ENCODE measurements at regions of chr9 and their contacts with region 1.

Region 1: DNA sequence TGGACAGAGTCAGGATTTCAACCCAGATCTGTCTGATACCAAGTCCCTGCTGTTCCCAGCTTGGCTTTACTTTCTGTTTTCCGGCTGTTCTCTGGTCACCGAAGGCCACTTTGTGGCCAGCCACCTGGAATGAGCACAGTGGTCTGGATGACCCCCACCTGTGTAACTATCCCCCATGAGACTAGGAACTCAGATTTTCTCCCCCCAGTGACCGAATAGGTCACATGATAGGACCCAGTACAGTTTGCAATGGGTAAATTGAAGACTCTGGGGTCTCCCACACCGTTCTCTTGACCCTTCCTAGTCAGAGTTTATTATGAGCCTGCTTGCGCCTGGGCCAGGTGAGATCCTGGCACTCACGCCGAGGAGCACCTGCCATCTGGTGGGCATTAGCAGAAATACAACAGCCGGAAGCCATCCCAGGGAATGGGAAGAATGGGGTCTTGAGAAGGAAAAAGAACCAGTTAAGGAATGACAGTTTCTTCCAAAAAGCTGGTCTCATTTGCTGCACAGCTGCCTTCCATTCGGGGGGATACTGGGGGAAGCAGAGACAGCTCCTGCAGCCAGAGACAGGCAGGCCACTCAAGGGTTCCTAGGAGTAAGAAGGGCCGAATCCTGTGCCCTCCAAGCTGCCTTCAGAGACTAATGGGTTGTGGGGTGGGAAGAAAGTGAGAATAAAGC is 7.1 kb downstream of the PHYHD1 start:
- DNase-seq: peak; percentile 81
- CTCF ChIP-seq: peak; percentile 85

Region 2: GRCh38 chr9:128863647-128864046 is 64.2 kb before region 1 on chr9:
- in situ Hi-C with region 1: loop called (anchors 10 kb)
- DNase-seq: peak; percentile 89
- CTCF ChIP-seq: peak; percentile 96

Region 3: GRCh38 chr9:129068990-129069861 is 141.4 kb after region 1 on chr9:
- in situ Hi-C with region 1: no loop called
- DNase-seq: no peak
- CTCF ChIP-seq: no peak

Measured in GM13976 (cell line).